Cardiac septum (tissue), 1 donor: ENCODE measurements at regions of chr12 and their contacts with region 1.

Region 1: DNA sequence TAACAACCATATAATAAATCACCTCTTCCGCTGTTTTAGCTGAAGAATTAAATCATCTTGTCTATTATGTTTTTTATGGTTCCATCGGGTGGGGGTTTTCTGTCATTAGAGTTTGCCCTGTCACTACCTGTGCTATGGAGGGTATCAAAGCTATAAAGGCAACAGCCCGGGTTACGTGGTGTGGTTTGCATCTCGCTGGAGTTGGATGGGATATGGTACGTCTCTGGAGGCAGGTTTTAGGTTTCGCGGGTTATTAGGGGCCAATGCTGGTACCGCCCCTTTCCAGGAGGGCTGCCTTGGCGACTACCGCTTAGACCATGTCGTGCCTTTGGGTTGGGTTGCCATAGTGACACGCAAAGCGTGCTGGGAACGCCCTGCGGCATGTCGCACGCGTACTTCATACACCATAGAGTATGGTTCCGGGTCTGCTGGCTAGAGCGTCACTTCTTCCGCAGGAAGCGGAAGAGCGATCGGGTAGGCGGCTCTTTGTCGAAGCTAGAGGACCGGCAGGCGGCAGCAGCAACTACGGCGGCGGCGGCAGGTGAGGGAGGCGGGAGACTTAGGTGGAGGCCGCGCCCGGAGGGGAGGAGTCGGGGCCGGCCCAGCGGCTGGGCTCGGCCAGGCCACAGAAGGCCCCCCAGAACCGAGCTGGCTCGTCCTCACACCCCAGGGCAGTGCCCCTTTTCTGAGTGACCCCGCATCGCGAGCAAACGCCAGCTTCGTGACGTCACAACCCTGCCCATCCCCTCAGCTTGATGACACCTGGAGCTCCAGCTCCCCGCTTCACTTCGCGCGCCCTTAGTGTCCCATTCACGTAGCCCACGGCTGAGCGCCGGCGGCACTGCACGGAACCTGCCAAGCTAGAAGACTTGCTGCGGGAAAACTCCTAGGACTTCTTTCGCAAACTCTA is at the start of gene ZC3H10:
- DNase-seq: peak; percentile 98
- total RNA-seq, gene ZC3H10: 6.0 TPM

Region 2: DNA sequence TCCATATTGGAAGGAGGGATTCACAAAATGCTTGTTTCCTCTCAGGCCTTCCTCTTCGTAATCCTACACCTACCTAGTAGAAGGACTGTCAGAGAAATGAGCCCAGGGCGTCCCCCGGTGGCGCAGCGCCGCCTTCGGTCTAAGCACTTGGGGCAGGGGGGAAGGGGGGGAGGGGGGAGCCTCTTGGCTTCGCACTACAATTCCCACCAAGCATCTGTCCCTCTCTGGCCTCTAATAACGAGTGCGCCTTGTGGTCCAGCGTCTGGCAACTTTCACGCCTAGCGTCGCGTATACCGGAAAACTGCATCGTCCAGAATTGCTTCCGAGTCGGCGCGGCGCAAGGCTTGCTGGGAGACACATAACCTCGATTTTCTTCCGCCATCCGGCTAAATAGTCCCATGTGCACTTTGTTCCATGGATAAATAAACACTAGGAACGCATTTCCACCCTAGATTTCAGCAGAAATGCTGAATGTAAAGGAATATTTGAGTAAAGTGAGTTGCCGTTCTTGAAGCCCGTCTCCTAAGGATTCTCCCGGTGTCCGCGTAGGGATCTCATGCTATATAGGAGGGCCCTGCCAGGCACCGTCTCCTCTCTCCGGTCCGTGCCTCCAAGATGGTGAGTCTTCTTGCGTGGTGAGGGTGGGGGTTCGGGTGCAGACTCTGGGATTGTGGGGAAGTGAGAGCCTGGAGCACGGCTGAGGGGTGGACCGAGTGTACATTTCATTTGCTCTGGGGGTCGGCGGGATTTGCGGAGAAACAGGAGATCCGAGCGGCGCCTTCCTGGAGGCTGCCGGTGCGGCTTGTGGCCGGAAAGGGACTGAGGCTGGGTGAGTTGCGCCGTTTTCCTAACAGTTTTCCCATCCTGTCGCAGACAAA is 76.2 kb before region 1 on chr12 and contains the start of gene RPS26:
- intact Hi-C with region 1: loop called (anchors 5 kb)
- DNase-seq: peak; percentile 96
- total RNA-seq, gene RPS26: 39.5 TPM

Region 3: GRCh38 chr12:56079665-56080555 is 38.1 kb before region 1 on chr12 and contains the start of gene ERBB3:
- intact Hi-C with region 1: no loop called
- DNase-seq: no peak
- total RNA-seq, gene ERBB3: 1.5 TPM

Region 4: GRCh38 chr12:56098592-56098991 is 19.4 kb before region 1 on chr12:
- intact Hi-C with region 1: no loop called
- DNase-seq: no peak

Region 5: DNA sequence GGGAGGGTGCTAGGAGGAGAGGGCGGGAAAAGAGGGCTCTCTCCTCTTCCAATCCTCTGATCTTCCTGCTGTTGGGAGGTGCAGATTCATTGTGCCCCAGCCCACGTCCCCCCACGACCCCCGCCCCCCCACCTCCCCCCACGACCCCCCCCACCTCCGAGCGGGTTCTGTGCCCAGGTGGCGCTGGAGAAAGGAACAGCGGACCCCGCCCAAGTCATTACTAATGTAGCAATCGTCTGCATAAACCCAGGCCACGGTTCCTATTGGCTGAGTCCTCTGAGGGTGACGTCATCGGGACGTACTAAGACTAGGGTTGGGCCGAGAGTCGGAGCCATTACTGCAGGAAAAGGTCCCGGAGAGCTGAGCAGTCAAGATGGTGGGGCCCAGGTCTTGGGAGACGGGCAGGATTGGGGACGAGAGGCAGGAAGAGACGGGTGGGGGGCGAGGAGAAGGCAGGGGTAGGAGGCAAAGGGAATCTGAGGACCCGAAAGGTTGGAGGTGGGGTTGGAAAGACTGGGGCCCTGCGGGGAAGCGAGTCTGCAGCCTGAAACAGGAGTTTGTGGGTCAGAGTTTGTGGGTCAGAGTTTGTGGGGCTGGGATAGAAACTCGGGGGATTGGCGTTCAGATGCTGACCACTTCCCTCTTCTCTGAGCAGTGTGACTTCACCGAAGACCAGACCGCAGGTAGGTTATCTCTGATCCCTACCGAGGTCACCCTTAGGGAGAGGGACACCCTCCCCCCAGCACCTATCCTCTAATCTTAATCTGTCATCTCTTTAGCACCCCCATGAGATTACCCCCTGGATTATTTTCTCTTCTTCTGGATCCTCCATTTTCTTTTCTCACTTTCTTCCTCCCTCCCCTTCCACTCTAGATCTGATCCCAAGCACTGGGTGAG is 40.2 kb after region 1 on chr12 and contains the start of gene MYL6:
- intact Hi-C with region 1: loop called (anchors 2 kb)
- DNase-seq: peak; percentile 99
- total RNA-seq, gene MYL6: 792 TPM

Region 6: GRCh38 chr12:56224102-56224701 is 106.2 kb after region 1 on chr12 and contains the start of gene NABP2:
- intact Hi-C with region 1: loop called (anchors 1 kb)
- DNase-seq: peak; percentile 99
- total RNA-seq, gene NABP2: 19.6 TPM

Region 7: DNA sequence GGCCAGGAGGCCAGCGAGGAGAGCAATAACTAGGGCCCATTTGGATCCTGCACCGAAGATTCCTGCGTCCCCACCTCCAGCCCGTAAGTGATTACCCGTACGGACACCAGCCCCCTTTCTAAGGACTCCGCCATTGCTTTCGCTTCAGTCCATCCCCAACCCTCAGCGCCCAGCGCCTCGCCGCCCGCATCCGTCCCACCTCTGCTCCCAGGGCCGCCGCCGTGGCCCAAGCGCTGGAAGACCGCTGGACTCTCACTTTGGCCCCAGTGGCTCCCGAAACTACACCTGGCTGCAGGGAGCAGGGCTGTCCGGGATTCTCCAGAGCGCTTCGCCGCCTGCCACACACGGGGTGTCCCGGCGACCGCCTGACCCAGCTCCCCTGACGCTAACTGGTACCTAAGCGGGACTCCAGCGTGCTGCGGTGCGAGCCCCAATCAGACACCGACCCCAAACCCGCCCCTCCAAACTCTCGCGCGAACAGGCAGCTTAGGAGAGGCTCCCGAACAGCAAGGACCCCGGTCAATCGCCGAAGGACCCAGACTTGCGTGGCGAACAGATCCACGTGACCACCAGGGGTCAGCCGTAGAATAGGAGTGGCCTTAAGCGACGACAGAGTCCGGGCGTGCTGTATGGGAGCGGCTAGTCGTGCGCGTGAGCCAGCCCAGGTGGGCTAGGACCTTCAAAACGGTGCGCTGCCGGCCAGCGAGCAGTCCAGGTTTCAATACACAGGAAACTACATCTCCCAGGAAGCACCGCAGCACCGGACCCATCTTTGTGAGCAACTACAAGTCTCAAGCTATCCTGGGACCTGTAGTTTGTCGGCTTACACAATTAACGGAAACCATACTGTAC is 197.8 kb after region 1 on chr12 and contains the start of gene CNPY2:
- intact Hi-C with region 1: loop called (anchors 5 kb)
- DNase-seq: peak; percentile 95
- total RNA-seq, gene CNPY2: 38.0 TPM